ENCODE measurements at regions of chr3 and their contacts with region 1.

Region 1: DNA sequence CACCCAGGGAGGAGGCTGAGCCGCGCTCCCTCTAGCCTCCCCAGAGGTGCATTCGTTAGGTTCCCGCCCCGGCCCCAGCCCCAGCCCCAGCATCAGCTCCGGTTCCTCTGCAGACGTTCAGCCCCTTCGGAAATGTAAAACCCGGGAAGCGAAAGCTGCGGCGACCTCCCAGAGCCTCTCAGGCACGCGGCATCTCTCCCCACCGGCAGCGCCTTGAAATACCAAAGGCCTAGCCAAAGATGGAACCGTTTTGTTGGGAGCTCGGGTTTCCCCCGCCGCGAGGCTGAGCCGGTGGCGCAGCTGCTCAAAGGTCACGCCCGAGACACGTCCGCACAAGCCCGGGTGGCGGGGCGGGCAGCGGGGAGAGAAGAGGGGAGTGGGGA is 77.8 kb upstream of the HES1 start:
- DNase-seq: peak; percentile 73
- CTCF ChIP-seq: no peak

Region 2: GRCh38 chr3:194036842-194037241 is 21.3 kb before region 1 on chr3:
- CTCF ChIA-PET with region 1: no interaction called
- POLR2A ChIA-PET with region 1: no interaction called
- DNase-seq: no peak
- CTCF ChIP-seq: no peak

Region 3: GRCh38 chr3:194070634-194071409 is 12.6 kb after region 1 on chr3:
- CTCF ChIA-PET with region 1: interaction called, 17 read pairs
- POLR2A ChIA-PET with region 1: no interaction called
- DNase-seq: peak; percentile 95
- CTCF ChIP-seq: no peak

Region 4: GRCh38 chr3:194084284-194084683 is 26.1 kb after region 1 on chr3:
- CTCF ChIA-PET with region 1: no interaction called
- POLR2A ChIA-PET with region 1: no interaction called
- DNase-seq: peak; percentile 59
- CTCF ChIP-seq: no peak

Region 5: DNA sequence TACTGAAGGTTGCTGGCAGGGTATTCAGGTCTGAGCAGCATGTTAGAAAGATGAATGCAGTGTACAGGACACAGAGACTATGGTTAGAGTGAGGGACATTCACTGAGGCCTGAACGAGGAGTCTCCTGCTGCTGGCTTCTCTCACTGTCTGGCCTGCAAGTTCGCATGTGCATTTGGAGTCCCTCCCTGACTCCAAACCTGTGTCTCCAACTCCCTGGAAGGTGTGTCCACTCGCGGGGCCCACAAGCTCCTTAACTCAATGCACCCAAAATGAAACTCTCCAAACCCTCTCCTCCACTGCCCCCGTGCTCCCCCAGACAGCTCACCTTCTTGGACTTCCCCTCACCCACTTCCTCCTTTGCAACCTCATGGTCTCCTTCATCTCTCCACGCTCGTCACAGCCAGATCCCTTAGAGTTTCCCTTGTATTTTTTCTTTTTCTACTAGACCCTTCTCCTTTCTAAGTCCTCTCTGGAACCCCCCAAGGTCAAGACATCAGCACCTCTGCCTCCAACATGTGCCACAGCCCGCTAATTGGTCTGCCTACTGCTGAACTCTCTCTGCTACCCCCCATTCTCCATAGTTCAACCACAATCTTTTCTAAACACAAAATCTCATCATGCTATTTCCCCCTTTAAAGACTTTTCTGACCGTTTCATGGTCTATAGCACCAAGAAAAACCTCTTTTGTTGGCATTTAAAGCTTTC is 136.0 kb after region 1 on chr3:
- CTCF ChIA-PET with region 1: no interaction called
- POLR2A ChIA-PET with region 1: no interaction called
- DNase-seq: peak; percentile 42
- CTCF ChIP-seq: no peak

Measured in GM10248 (cell line).